Aorta (tissue), 5 donors: ENCODE measurements at regions of chr12 and their contacts with region 1.

Region 1: GRCh38 chr12:76763743-76764675 is at the start of gene ZDHHC17:
- DNase-seq: peak; percentile 94 to 96
- ATAC-seq: peak; percentile 97
- H3K4me3 ChIP-seq: peak within 1 kb of the TSS; percentile 68 to 76
- H3K27ac ChIP-seq: peak within 1 kb of the TSS; percentile 62 to 92
- H3K4me1 ChIP-seq: peaks cover 0 to 2% of the 10 kb centered on the region in 2 donors
- H3K27me3 ChIP-seq: no peaks in the 10 kb centered on the region
- total RNA-seq, gene ZDHHC17: 47.1 to 52.2 TPM

Region 2: DNA sequence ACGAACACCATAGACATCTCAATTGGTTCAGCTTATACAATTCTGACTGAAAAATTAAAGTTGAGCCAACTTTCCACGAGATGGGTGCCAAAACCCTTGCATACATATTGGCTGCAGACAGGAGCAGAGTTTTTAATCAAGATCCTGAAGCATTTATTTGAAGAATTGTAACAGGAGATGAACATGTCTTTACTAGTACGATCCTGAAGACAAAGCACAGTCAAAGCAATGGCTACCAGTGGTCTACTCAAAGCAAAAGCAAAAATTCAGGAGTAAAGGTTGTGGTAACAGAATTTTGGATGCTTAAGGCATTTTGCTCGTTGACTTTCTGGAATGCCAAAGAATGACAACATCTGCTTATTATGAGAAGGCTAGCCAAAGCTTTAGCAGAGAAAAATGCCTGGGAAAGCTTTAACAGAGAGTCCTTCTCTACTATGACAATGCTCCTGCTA is 20.6 kb after region 1 on chr12:
- intact Hi-C with region 1: loop called in 1 of 2 experiments (anchors 2 kb)
- DNase-seq: no peak
- ATAC-seq: peak; percentile 62
- H3K4me3 ChIP-seq: peak overlapping the region in 1 of 2 donors; percentile 18
- H3K27ac ChIP-seq: peak overlapping the region; percentile 51 to 82
- H3K4me1 ChIP-seq: no peaks in the 10 kb centered on the region
- H3K27me3 ChIP-seq: no peaks in the 10 kb centered on the region